ENCODE measurements at regions of chr5 and their contacts with region 1.

Region 1: GRCh38 chr5:80109646-80110478 is 74.7 kb downstream of the THBS4 start:
- DNase-seq: no peak

Region 2: GRCh38 chr5:79423296-79423695 is 686.6 kb before region 1 on chr5:
- intact Hi-C with region 1: loop called in 1 of 2 experiments (anchors 5 kb)
- DNase-seq: no peak

Region 3: DNA sequence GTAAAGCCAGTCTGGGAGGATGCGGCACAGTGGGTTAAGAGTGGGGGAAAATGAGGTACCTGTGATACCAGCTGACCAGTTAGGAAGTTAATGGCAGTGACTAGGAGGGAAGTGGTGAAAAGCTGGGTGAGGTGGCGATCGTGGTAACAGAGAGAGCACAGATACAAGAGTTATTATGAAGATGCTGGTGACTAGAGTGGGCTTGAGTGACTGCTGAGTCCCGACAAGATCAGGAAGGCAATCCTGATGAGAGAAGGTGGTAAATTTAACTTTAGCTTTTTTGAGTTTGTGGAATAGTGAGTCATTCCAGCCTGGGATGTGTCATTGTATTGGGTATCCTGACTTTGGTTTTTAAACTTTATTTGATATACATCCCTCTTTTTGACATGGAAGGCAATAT is 381.5 kb before region 1 on chr5:
- intact Hi-C with region 1: no loop called
- DNase-seq: no peak